ENCODE measurements at regions of chr1 and their contacts with region 1.

Region 1: GRCh38 chr1:8047681-8048445 is 21.8 kb upstream of the ERRFI1 start:
- DNase-seq: peak; percentile 93
- H3K4me3 ChIP-seq: no peak overlapping the region
- H3K27ac ChIP-seq: peak overlapping the region; percentile 89
- H3K4me1 ChIP-seq: peaks cover 27% of the 10 kb centered on the region
- H3K27me3 ChIP-seq: no peaks in the 10 kb centered on the region
- CTCF ChIP-seq: no peak

Region 2: DNA sequence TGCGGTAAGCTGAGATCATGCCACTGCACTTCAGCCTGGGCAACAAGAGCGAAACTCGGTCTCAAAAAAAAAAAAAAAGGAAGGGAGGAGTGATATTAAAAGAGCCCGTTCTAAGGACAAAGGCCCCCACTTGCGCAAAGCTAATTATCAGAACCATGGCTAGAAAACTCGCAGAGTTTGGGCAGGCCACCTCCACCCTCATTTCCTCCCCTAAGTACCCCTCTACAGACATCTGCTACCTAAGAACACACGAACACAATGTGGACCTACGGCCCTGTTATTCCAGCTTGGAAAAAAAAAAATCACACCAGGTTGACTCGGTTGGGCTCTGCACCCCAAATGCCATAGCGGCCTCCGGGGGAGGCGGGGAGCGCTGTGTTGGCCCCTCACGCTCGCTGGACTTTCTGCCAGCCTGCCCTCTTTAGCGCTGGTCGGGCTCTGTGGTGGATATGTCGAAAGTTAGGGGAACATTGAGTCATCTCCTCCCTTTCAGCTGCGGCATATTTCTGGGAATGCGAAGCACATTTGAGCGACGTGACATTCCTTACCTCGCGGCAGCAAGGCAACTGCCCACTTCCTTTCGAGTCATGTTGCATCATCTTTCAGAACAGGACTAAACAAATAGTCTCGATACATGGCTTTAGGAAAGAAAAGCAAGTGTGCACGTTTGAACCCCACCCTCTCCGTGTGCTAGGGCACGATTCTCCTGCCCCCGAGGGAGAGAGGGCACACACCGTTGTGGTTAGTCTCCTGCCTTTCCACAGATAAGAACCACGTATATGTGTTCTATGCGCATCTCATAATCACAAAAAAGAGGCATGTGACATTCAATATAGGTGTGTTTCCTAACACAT is 164.0 kb after region 1 on chr1:
- CTCF ChIA-PET with region 1: no interaction called
- dilution Hi-C with region 1: no loop called
- in situ Hi-C with region 1: no loop called
- intact Hi-C with region 1: loop called (anchors 2 kb)
- DNase-seq: peak; percentile 98
- H3K4me3 ChIP-seq: no peak overlapping the region
- H3K27ac ChIP-seq: peak overlapping the region; percentile 86
- H3K4me1 ChIP-seq: peaks cover 25% of the 10 kb centered on the region
- H3K27me3 ChIP-seq: no peaks in the 10 kb centered on the region
- CTCF ChIP-seq: no peak